CD8-positive, alpha-beta T cell (primary cell): ENCODE measurements at regions of chr1 and their contacts with region 1.

Region 1: DNA sequence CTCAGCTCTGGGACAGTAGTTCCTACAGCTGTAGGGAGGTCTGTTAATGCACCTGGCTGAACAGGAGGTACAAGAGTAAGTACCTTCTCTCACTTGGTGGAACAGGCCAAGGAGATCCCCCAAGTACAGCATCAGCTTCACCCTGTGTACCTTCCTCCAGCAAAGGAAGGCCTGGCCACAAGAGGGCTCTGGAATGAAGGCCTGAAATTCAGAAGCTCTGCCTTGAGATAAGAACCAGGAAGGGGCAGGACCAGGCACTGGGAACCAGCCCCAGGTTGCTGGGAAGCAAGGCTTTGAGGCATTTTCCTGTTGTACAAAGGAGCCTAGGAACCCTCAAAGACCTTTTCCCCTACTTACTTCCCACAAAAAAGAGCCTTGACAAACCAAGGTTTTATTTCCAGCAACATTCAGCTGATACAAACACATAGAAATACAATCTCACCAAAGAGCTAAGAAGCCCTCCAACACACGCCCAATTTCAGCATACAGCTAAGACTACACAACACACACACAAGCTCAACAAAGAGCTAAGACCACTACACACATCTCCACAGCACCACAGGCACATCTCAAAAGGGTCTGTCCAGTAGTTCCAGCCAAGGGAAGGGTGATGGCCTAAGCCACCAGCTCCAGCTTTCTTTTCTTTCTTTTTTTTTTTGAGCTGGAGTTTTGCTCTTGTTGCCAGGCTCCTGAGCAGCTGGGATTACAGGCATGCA is 23.5 kb downstream of the F11R start:
- DNase-seq: peak in 8 of 9 experiments; percentile 37 to 71 (median 56)
- ATAC-seq: peak; percentile 82
- H3K4me3 ChIP-seq: no peak overlapping the region
- H3K4me3 Mint-ChIP-seq: no peak overlapping the region
- H3K27ac ChIP-seq: no peak overlapping the region
- H3K27ac Mint-ChIP-seq: peak overlapping the region; percentile 29
- H3K4me1 ChIP-seq: no peaks in the 10 kb centered on the region
- H3K4me1 Mint-ChIP-seq: peaks cover 5% of the 10 kb centered on the region
- H3K27me3 ChIP-seq: no peaks in the 10 kb centered on the region
- H3K27me3 Mint-ChIP-seq: no peaks in the 10 kb centered on the region
- CTCF ChIP-seq: peak; percentile 30

Region 2: GRCh38 chr1:161021165-161021960 is 23.9 kb after region 1 on chr1:
- CTCF ChIA-PET with region 1: interaction called, 19 read pairs
- POLR2A ChIA-PET with region 1: interaction called, 3 read pairs
- intact Hi-C with region 1: no loop called
- DNase-seq: peak; percentile 75 to 95 (median 89)
- ATAC-seq: peak; percentile 94
- H3K4me3 ChIP-seq: peak overlapping the region; percentile 51 to 89
- H3K4me3 Mint-ChIP-seq: peak overlapping the region; percentile 93
- H3K27ac ChIP-seq: peak overlapping the region; percentile 22 to 73
- H3K27ac Mint-ChIP-seq: peak overlapping the region; percentile 83
- H3K4me1 ChIP-seq: peaks cover 14% of the 10 kb centered on the region
- H3K4me1 Mint-ChIP-seq: peaks cover 37% of the 10 kb centered on the region
- H3K27me3 ChIP-seq: no peaks in the 10 kb centered on the region
- H3K27me3 Mint-ChIP-seq: no peaks in the 10 kb centered on the region
- CTCF ChIP-seq: no peak

Region 3: DNA sequence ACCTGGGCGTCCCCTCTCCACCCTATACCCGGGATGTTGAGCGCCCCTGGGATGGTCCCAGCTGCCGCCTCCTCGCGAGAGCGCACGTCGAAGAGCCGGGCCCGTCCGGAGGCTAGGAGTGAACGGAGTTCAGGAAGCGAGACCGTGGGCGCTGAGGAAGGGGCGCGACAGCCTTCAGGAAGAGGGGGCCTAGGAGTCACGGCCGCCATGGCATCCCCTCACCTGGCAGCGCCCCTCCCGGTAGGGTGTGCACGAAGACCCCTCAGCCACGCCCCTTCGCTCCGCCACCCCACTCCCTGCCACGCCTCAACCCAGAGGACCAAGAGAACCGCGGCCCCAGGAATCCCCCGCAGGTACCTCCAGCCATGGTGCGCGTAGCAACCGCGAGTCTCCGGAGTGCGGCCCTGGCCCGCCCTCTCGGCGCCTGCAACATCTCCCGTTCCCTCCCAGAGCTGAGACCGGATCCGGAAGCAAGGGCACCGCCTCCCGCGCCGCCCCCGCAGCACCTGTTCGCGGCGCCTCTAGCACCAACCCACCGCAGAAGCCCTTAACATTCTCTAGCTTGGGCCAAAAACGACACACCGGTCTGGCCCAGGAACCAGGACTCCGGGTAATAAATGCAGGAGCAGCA is 41.2 kb after region 1 on chr1 and contains the start of gene TSTD1:
- CTCF ChIA-PET with region 1: interaction called, 14 read pairs
- POLR2A ChIA-PET with region 1: interaction called, 15 read pairs
- intact Hi-C with region 1: loop called in 1 of 2 experiments (anchors 2 kb)
- DNase-seq: peak; percentile 68 to 95 (median 86)
- ATAC-seq: peak; percentile 88
- H3K4me3 ChIP-seq: peak within 1 kb of the TSS; percentile 87 to 89
- H3K4me3 Mint-ChIP-seq: peak within 1 kb of the TSS; percentile 90
- H3K27ac ChIP-seq: peak within 1 kb of the TSS; percentile 75 to 83
- H3K27ac Mint-ChIP-seq: peak within 1 kb of the TSS; percentile 96
- H3K4me1 ChIP-seq: peaks cover 35% of the 10 kb centered on the region
- H3K4me1 Mint-ChIP-seq: peaks cover 56% of the 10 kb centered on the region
- H3K27me3 ChIP-seq: no peaks in the 10 kb centered on the region
- H3K27me3 Mint-ChIP-seq: no peaks in the 10 kb centered on the region
- CTCF ChIP-seq: no peak
- total RNA-seq, gene TSTD1: 44.8 to 46.6 TPM

Region 4: DNA sequence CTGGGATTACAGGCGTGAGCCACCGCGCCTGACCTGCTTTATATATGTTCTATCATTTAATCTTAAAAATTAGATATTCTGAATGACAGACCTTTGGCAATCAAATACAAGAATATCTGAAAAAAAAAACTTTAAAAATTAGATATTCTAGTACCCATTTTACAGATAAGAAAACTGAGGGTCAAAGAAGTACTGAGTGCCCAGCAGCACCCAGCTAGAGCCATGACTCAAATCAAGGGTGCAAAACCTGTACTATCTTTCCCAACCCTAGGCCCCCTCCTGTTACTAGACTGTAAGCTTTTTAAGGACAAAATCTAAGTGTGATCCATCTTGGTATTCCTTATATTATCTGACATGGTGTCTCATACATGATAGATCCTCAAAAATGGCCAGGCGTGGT is 63.9 kb after region 1 on chr1:
- CTCF ChIA-PET with region 1: interaction called, 10 read pairs
- POLR2A ChIA-PET with region 1: no interaction called
- intact Hi-C with region 1: no loop called
- DNase-seq: no peak
- ATAC-seq: no peak
- H3K4me3 ChIP-seq: no peak overlapping the region
- H3K4me3 Mint-ChIP-seq: no peak overlapping the region
- H3K27ac ChIP-seq: peak overlapping the region in 1 of 2 experiments; percentile 26
- H3K27ac Mint-ChIP-seq: peak overlapping the region; percentile 41
- H3K4me1 ChIP-seq: peaks cover 63% of the 10 kb centered on the region
- H3K4me1 Mint-ChIP-seq: peaks cover 69% of the 10 kb centered on the region
- H3K27me3 ChIP-seq: no peaks in the 10 kb centered on the region
- H3K27me3 Mint-ChIP-seq: no peaks in the 10 kb centered on the region
- CTCF ChIP-seq: no peak

Region 5: DNA sequence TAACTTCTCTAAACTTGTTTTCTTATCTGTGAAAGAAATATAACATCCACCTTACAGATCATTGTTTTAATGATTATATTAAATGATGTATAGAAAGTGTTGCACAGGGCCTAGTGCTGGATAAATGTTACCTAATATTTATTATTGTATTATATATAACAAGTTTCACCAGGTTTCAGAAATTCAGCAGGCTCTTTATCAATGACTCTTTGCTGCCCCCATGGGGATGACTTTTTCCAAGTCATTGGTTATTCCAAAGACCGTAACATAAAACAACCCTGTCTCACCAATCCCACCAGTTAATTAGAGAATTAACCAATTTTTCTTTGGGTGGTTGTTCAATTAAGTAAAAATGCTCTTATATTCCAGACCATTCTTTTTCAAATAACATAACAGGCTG is 142.3 kb after region 1 on chr1:
- CTCF ChIA-PET with region 1: interaction called, 15 read pairs
- POLR2A ChIA-PET with region 1: no interaction called
- intact Hi-C with region 1: loop called in 1 of 2 experiments (anchors 1 kb)
- DNase-seq: peak in 6 of 9 experiments; percentile 16 to 67 (median 46)
- ATAC-seq: no peak
- H3K4me3 ChIP-seq: no peak overlapping the region
- H3K4me3 Mint-ChIP-seq: no peak overlapping the region
- H3K27ac ChIP-seq: no peak overlapping the region
- H3K27ac Mint-ChIP-seq: no peak overlapping the region
- H3K4me1 ChIP-seq: no peaks in the 10 kb centered on the region
- H3K4me1 Mint-ChIP-seq: peaks cover 10% of the 10 kb centered on the region
- H3K27me3 ChIP-seq: no peaks in the 10 kb centered on the region
- H3K27me3 Mint-ChIP-seq: no peaks in the 10 kb centered on the region
- CTCF ChIP-seq: peak; percentile 53